ENCODE measurements at regions of chr20 and their contacts with region 1.

Region 1: DNA sequence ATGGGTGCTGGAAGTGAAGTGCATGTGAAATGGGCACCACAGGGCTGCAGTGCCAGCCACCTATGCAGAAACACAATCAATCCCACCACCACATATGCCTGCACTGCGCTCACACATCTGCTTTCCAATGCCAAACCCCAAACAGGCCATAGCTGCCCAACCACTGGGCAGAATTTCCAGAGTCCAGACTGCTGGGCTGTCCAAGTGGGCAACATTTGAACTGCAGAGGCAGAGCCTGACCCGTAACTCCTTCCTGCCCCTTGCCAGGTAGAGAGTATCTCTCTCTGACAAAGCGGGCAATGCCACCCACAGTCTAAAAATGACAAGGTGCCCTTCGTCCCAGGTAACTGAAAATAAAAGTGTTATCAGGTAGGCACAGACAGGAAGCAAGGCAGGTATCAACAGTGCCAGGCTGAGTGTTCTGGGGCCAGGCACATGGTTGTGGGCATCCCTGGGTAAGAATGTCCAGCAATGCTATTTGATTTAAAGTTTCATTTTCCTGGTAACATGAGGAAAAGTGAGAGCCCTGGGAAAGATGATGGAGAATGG is 79.5 kb downstream of the FOXA2 start:
- DNase-seq: no peak
- H3K4me3 ChIP-seq: no peak overlapping the region
- H3K27ac ChIP-seq: no peak overlapping the region
- H3K4me1 ChIP-seq: 0 out of 2 replicates have a peak, but pooled peaks cover 5% of the 10 kb centered on the region
- H3K27me3 ChIP-seq: 0 out of 2 replicates have a peak, but pooled peaks cover 16% of the 10 kb centered on the region
- CTCF ChIP-seq: no peak

Region 2: DNA sequence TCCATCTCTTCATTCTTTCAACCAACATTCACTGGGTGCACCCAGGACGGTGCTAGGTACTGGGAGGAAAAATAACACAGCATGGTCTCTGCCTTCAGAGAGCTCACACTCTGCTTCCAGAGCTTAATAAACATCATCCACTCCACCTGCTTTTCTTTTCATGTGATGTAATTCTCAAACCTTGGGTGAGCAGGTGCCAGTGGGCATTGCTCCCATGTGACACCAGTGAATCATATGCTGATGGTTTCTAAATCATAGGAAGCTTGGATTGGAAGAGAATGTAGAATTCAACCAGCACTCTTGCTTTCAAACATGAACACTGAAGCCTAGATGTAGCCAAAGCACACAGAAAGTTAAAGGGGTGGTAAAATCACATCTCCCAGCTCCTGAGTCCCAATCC is 110.3 kb before region 1 on chr20:
- CTCF ChIA-PET with region 1: interaction called, 17 read pairs
- POLR2A ChIA-PET with region 1: no interaction called
- intact Hi-C with region 1: no loop called
- DNase-seq: no peak
- H3K4me3 ChIP-seq: no peak overlapping the region
- H3K27ac ChIP-seq: no peak overlapping the region
- H3K4me1 ChIP-seq: peaks cover 24% of the 10 kb centered on the region
- H3K27me3 ChIP-seq: no peaks in the 10 kb centered on the region
- CTCF ChIP-seq: no peak

Measured in PC-9 (cell line).